CD8-positive, alpha-beta T cell (primary cell): ENCODE measurements at regions of chr11 and their contacts with region 1.

Region 1: DNA sequence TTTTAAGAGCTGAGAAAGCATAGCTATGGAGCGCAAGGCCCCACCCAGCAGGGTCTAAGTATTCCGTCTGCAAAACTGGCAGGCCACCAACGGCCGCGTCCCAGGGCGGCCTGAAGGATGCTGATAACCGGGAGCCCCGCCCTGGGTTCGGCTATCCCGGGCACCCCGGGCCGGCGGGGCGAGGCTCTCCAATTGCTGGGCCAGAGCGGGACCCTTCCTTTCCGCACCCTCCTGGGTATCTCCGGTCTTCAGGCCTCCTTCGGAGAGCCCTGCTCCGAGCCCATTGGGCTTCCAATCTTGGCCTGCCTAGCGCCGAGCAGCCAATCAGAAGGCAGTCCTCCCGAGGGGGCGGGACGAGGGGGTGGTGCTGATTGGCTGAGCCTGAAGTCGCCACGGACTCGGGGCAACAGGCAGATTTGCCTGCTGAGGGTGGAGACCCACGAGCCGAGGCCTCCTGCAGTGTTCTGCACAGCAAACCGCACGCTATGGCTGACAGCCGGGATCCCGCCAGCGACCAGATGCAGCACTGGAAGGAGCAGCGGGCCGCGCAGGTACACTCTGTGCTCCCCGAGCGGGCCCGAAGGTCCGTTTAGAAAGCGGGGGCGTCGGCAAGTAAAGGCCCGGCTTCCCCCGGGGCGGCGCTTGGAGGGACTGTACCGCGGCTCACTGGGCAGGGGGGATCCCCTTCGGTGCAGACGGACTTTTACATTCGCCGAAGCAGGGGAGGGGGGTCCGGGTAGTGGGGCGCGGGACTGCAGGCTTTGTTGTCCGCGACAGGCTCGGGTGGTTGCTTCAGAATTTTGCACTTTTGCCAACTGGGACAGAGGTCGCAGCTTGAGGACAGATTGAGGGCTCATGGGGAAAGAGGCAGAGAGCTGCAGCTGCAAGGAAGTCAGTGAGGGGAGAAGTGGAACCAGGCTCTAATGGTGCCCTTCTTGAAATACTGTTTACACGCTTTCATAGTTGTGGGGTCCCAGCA is at the start of gene CAT:
- DNase-seq: peak; percentile 96 to 98 (median 97)
- ATAC-seq: peak; percentile 94
- H3K4me3 ChIP-seq: peak within 1 kb of the TSS; percentile 97 to 98
- H3K4me3 Mint-ChIP-seq: peak within 1 kb of the TSS; percentile 94
- H3K27ac ChIP-seq: peak within 1 kb of the TSS; percentile 80 to 81
- H3K27ac Mint-ChIP-seq: peak within 1 kb of the TSS; percentile 96
- H3K4me1 ChIP-seq: peaks cover 18% of the 10 kb centered on the region
- H3K4me1 Mint-ChIP-seq: peaks cover 49% of the 10 kb centered on the region
- H3K27me3 ChIP-seq: no peaks in the 10 kb centered on the region
- H3K27me3 Mint-ChIP-seq: no peaks in the 10 kb centered on the region
- CTCF ChIP-seq: no peak
- total RNA-seq, gene CAT: 8.2 to 8.7 TPM

Region 2: GRCh38 chr11:33039274-33040032 is 1399.4 kb before region 1 on chr11 and contains the start of gene TCP11L1:
- CTCF ChIA-PET with region 1: no interaction called
- POLR2A ChIA-PET with region 1: no interaction called
- intact Hi-C with region 1: loop called in 1 of 2 experiments (anchors 5 kb)
- DNase-seq: peak; percentile 60 to 89 (median 83)
- ATAC-seq: peak; percentile 81
- H3K4me3 ChIP-seq: peak within 1 kb of the TSS; percentile 98
- H3K4me3 Mint-ChIP-seq: peak within 1 kb of the TSS; percentile 95
- H3K27ac ChIP-seq: peak within 1 kb of the TSS; percentile 71 to 86
- H3K27ac Mint-ChIP-seq: peak within 1 kb of the TSS; percentile 91
- H3K4me1 ChIP-seq: peaks cover 10% of the 10 kb centered on the region
- H3K4me1 Mint-ChIP-seq: peaks cover 20% of the 10 kb centered on the region
- H3K27me3 ChIP-seq: no peaks in the 10 kb centered on the region
- H3K27me3 Mint-ChIP-seq: no peaks in the 10 kb centered on the region
- CTCF ChIP-seq: no peak
- total RNA-seq, gene TCP11L1: 10.9 to 12.3 TPM

Region 3: DNA sequence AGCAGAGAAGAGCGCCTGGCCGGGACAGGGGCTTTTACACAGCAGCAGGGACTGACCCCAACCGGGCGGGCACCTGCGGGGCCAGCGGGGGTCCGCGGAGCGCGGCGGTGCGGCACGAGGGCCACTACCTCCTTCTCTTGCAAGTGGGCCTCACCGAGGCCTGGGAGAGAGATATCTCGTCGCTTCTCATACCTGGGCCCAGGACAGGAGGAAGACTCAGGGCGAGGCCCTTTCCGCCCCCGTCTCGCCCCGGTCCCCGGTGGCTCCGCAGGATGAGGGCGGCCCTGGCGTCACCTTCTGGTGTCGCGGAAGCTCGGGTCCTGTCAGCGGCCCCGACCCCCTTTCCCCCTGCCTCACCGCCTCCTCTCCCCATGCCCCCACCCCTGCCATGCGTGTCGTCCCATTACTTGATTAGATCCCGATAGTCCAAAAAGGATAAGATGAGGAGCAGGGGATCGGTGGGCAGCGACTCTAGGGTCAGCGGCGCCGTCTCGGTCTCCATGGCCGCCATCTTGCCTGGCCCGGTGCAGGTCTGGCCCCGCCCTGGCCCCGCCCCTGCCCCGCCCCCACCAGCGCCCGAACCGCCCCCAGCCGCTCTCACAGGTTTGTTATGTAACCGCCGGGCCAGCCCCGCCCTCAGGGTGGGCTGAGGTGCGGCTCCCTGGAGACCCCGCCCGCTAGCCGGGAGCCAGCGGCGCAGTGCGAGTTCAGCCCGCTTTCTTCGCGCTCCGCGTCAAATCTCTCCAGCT is 664.7 kb before region 1 on chr11 and contains the start of gene FBXO3:
- CTCF ChIA-PET with region 1: no interaction called
- POLR2A ChIA-PET with region 1: no interaction called
- intact Hi-C with region 1: loop called (anchors 1 kb)
- DNase-seq: peak; percentile 73 to 93 (median 88)
- ATAC-seq: peak; percentile 89
- H3K4me3 ChIP-seq: peak within 1 kb of the TSS; percentile 91 to 96
- H3K4me3 Mint-ChIP-seq: peak within 1 kb of the TSS; percentile 98
- H3K27ac ChIP-seq: peak within 1 kb of the TSS; percentile 71 to 80
- H3K27ac Mint-ChIP-seq: peak within 1 kb of the TSS; percentile 96
- H3K4me1 ChIP-seq: peaks cover 29% of the 10 kb centered on the region
- H3K4me1 Mint-ChIP-seq: peaks cover 49% of the 10 kb centered on the region
- H3K27me3 ChIP-seq: peaks cover 2 to 10% of the 10 kb centered on the region in 2 experiments
- H3K27me3 Mint-ChIP-seq: peaks cover 8% of the 10 kb centered on the region
- CTCF ChIP-seq: no peak
- total RNA-seq, gene FBXO3: 54.8 to 55.4 TPM

Region 4: GRCh38 chr11:34105079-34105956 is 333.5 kb before region 1 on chr11 and contains the start of gene NAT10:
- CTCF ChIA-PET with region 1: no interaction called
- POLR2A ChIA-PET with region 1: no interaction called
- intact Hi-C with region 1: loop called (anchors 1 to 2 kb)
- DNase-seq: peak; percentile 93 to 100 (median 98)
- ATAC-seq: peak; percentile 93
- H3K4me3 ChIP-seq: peak within 1 kb of the TSS; percentile 70 to 94
- H3K4me3 Mint-ChIP-seq: peak within 1 kb of the TSS; percentile 97
- H3K27ac ChIP-seq: peak within 1 kb of the TSS; percentile 81 to 90
- H3K27ac Mint-ChIP-seq: peak within 1 kb of the TSS; percentile 99
- H3K4me1 ChIP-seq: peaks cover 27% of the 10 kb centered on the region
- H3K4me1 Mint-ChIP-seq: peaks cover 60% of the 10 kb centered on the region
- H3K27me3 ChIP-seq: no peaks in the 10 kb centered on the region
- H3K27me3 Mint-ChIP-seq: no peaks in the 10 kb centered on the region
- CTCF ChIP-seq: no peak
- total RNA-seq, gene NAT10: 51.1 to 59.6 TPM

Region 5: DNA sequence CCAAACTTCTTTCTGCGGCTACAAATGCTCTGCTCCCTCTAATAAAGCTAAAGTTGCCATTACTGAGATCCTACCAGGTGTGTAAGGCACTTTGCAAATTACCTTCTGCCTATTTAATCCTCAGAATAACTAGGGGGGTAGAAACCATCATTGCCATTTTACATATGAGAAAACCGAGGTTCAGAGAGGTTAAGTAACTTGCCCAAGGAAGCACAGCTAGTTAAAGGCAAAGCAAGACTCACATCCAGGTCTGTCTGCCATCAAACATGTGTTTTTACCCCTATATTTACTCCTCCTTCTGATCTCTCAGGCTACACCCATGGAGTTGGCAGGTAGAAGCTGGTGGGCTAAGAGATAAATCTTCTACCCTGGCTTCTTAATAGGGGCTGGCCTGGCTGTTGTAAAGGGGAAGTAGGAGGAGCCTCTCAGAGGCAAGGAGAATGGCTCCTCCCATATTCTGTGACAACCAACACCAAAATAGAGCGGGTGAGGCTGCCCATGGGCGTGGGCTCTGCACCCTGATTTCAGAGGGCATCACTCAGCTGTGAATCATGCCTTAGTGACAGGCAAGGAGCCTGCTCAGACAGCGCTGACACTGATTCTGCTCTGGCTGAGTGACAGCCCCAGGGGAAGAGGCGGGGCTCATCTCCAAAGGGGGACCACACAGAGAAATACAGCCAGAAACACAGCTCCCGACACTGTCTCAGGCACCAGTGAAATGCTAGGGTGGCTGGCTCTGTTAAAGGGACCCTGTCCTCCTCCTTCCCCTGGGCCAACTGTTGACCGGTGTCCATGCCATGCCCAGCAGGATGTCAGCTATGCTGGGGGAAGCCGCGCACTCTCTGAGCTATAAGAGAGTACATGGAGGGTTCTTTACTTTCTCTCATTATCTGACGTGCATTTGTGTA is 187.8 kb before region 1 on chr11:
- CTCF ChIA-PET with region 1: no interaction called
- POLR2A ChIA-PET with region 1: no interaction called
- intact Hi-C with region 1: loop called in 1 of 2 experiments (anchors 5 kb)
- DNase-seq: peak; percentile 33 to 90 (median 79)
- ATAC-seq: peak; percentile 94
- H3K4me3 ChIP-seq: peak overlapping the region; percentile 1 to 47
- H3K4me3 Mint-ChIP-seq: peak overlapping the region; percentile 66
- H3K27ac ChIP-seq: no peak overlapping the region
- H3K27ac Mint-ChIP-seq: peak overlapping the region; percentile 84
- H3K4me1 ChIP-seq: peaks cover 51% of the 10 kb centered on the region
- H3K4me1 Mint-ChIP-seq: peaks cover 54% of the 10 kb centered on the region
- H3K27me3 ChIP-seq: no peaks in the 10 kb centered on the region
- H3K27me3 Mint-ChIP-seq: peaks cover 3% of the 10 kb centered on the region
- CTCF ChIP-seq: no peak

Region 6: GRCh38 chr11:36289226-36289852 is 1850.5 kb after region 1 on chr11 and contains the start of gene COMMD9:
- CTCF ChIA-PET with region 1: no interaction called
- POLR2A ChIA-PET with region 1: no interaction called
- intact Hi-C with region 1: loop called (anchors 5 to 10 kb)
- DNase-seq: peak; percentile 86 to 96 (median 94)
- ATAC-seq: peak; percentile 96
- H3K4me3 ChIP-seq: peak within 1 kb of the TSS; percentile 65 to 90
- H3K4me3 Mint-ChIP-seq: peak within 1 kb of the TSS; percentile 89
- H3K27ac ChIP-seq: peak within 1 kb of the TSS; percentile 35 to 40
- H3K27ac Mint-ChIP-seq: peak within 1 kb of the TSS; percentile 87
- H3K4me1 ChIP-seq: peaks cover 22% of the 10 kb centered on the region
- H3K4me1 Mint-ChIP-seq: peaks cover 43% of the 10 kb centered on the region
- H3K27me3 ChIP-seq: no peaks in the 10 kb centered on the region
- H3K27me3 Mint-ChIP-seq: no peaks in the 10 kb centered on the region
- CTCF ChIP-seq: no peak
- total RNA-seq, gene COMMD9: 34.1 to 38.1 TPM